ENCODE measurements at regions of chr10 and their contacts with region 1.

Region 1: DNA sequence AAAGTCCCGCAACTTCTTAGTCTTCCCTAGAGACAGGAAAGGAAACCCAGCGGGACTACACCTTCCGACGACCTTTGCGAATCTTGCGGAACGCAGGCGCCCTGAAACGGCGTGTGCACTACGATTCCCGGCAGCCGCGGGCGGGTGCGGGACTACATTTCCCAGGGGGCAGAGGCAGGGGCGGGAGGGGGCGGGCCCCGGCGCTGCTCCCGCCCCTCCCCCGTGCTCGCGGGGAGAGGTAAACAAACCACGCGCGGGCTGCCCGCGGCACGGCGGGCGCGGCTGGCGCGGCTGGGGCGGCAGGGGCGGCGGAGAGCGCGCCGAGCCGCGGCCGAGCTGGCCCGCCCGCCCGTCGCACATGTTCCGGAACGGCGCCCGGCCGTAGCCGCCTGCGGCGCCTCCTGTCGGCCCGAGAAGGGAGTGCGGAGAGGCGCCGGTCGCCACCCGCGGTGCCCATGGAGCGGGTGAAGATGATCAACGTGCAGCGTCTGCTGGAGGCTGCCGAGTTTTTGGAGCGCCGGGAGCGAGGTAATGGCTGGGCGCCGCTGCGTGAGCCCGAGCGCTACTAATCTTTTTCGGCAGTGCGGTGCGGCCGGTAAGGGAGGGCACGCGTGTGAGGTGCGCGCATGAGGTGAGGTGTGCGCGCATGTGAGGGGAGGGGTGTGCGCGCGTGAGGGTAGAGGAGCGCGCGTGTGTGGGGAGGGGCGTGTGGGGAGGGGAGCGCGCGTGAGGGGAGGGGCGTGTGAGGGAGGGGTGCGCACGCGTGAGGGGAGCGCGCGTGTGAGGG is 18.5 kb downstream of the MXI1 start:
- DNase-seq: peak; percentile 92 to 96 (median 94)
- H3K4me3 ChIP-seq: peak overlapping the region; percentile 41 to 67 (median 60)
- H3K27ac ChIP-seq: peak overlapping the region; percentile 69 to 98 (median 82)
- H3K4me1 ChIP-seq: peaks cover 13 to 33% of the 10 kb centered on the region in 2 donors
- H3K27me3 ChIP-seq: no peaks in the 10 kb centered on the region
- CTCF ChIP-seq: peak; percentile 16 to 90 (median 63)
- POLR2A ChIP-seq: peak; percentile 63 to 75

Region 2: GRCh38 chr10:109823196-109823595 is 402.8 kb before region 1 on chr10:
- intact Hi-C with region 1: no loop called
- DNase-seq: no peak
- H3K4me3 ChIP-seq: no peak overlapping the region
- H3K27ac ChIP-seq: no peak overlapping the region
- H3K4me1 ChIP-seq: no peaks in the 10 kb centered on the region
- H3K27me3 ChIP-seq: no peaks in the 10 kb centered on the region
- CTCF ChIP-seq: no peak
- POLR2A ChIP-seq: no peak

Region 3: DNA sequence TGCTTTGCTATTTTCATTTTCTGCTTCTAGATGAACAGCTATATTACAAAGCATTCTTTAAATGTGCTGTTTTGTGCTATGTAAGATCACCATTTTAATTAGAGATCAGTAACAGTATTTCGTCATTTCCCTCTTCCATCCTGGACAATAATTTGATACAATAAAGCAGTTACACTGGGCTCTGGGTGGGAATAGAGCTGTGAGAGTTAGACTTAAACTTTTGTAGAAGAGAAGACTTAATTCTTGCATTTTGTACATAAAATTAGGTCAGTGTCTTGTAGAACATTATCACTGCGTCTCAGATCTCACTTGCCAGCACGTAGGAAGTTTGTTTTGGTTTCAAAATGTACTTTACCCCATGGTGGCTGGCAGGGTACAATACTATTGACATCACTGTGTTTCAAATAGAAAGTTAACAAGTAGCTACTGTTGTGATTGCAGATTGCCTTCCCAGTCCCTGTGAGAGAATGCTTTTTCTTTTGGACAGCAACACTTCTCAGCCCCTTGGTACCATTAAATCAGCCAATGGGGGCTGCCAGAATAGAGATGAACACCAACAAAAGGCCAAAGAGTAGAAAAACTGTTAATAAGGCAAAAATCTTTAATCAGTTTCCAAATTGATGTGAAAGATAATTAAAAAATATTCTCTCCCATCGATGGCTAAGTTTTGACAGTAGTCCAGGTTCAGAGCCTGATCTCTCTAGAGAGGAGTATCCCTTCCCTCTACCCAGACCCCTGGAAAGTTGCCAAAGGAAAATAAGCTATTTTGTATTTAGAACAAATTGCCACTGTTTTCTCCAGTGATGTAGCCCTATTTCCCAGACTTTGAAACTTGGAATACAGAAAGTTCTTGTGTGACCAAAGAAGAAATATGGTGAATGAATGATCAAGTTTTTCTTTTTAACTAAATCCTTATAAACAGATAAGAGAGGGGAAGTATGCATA is 43.7 kb after region 1 on chr10:
- intact Hi-C with region 1: loop called in 1 of 2 experiments (anchors 5 kb)
- DNase-seq: peak in 3 of 7 donors; percentile 17 to 47 (median 36)
- H3K4me3 ChIP-seq: peak overlapping the region in 1 of 4 donors; percentile 51
- H3K27ac ChIP-seq: peak overlapping the region; percentile 5 to 76 (median 52)
- H3K4me1 ChIP-seq: peaks cover 27 to 49% of the 10 kb centered on the region in 2 donors
- H3K27me3 ChIP-seq: no peaks in the 10 kb centered on the region
- CTCF ChIP-seq: no peak
- POLR2A ChIP-seq: peak in 1 of 2 donors; percentile 33

Region 4: GRCh38 chr10:110279407-110279986 is 53.5 kb after region 1 on chr10:
- intact Hi-C with region 1: loop called in 1 of 2 experiments (anchors 5 kb)
- DNase-seq: peak; percentile 23 to 88 (median 67)
- H3K4me3 ChIP-seq: peak overlapping the region in 1 of 4 donors; percentile 23
- H3K27ac ChIP-seq: peak overlapping the region in 2 of 5 donors; percentile 1 to 15
- H3K4me1 ChIP-seq: peaks cover 0 to 22% of the 10 kb centered on the region in 2 donors
- H3K27me3 ChIP-seq: no peaks in the 10 kb centered on the region
- CTCF ChIP-seq: peak; percentile 45 to 92 (median 88)
- POLR2A ChIP-seq: no peak

Measured in adrenal gland (tissue), 19 donors.